Activated CD4-positive, alpha-beta memory T cell treated with anti-CD3 and anti-CD28 coated beads for 36 hours (primary cell): ENCODE measurements at regions of chr16 and their contacts with region 1.

Region 1: GRCh38 chr16:23842137-23842600 is 6.4 kb downstream of the PRKCB start:
- DNase-seq: peak; percentile 71
- H3K4me3 Mint-ChIP-seq: peak overlapping the region; percentile 14
- H3K27ac Mint-ChIP-seq: peak overlapping the region; percentile 68
- H3K4me1 Mint-ChIP-seq: peaks cover 87% of the 10 kb centered on the region
- H3K27me3 Mint-ChIP-seq: no peaks in the 10 kb centered on the region

Region 2: GRCh38 chr16:23570992-23571632 is 271.1 kb before region 1 on chr16:
- CTCF ChIA-PET with region 1: no interaction called
- POLR2A ChIA-PET with region 1: no interaction called
- intact Hi-C with region 1: no loop called
- DNase-seq: no peak
- H3K4me3 Mint-ChIP-seq: no peak overlapping the region
- H3K27ac Mint-ChIP-seq: no peak overlapping the region
- H3K4me1 Mint-ChIP-seq: peaks cover 2% of the 10 kb centered on the region
- H3K27me3 Mint-ChIP-seq: no peaks in the 10 kb centered on the region

Region 3: GRCh38 chr16:23770744-23771426 is 71.3 kb before region 1 on chr16:
- CTCF ChIA-PET with region 1: no interaction called
- POLR2A ChIA-PET with region 1: no interaction called
- intact Hi-C with region 1: no loop called
- DNase-seq: no peak
- H3K4me3 Mint-ChIP-seq: no peak overlapping the region
- H3K27ac Mint-ChIP-seq: no peak overlapping the region
- H3K4me1 Mint-ChIP-seq: no peaks in the 10 kb centered on the region
- H3K27me3 Mint-ChIP-seq: peaks cover 3% of the 10 kb centered on the region

Region 4: DNA sequence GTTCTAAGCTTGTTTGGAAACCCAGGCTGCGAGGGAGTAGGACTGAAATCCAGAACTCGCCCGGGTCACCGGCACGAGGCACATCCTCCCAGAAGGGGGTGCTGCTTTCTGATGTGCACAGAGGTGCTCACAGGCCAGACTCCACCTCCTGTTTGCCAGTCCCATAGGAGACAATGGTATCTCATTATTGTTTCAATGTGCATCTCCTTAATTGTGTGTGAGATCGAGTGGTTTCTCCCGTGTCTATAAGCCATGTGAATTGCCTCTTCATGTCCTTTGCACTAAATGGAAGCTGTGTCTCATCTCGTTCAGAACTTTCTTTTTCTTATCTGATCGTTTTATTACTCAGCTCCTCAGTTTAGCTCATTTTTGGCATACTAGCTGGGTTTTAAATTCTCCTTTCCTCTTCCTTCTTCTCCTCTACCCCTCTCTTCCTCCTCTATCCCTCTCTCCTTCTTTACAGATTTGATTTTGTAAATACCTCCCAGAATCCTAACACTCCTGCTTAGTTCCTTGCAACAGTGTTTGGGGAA is 38.5 kb before region 1 on chr16:
- CTCF ChIA-PET with region 1: interaction called, 11 read pairs
- POLR2A ChIA-PET with region 1: no interaction called
- intact Hi-C with region 1: loop called (anchors 2 kb)
- DNase-seq: peak; percentile 78
- H3K4me3 Mint-ChIP-seq: peak overlapping the region; percentile 17
- H3K27ac Mint-ChIP-seq: no peak overlapping the region
- H3K4me1 Mint-ChIP-seq: peaks cover 9% of the 10 kb centered on the region
- H3K27me3 Mint-ChIP-seq: no peaks in the 10 kb centered on the region

Region 5: GRCh38 chr16:23863511-23864422 is 21.6 kb after region 1 on chr16:
- CTCF ChIA-PET with region 1: interaction called, 3 read pairs
- POLR2A ChIA-PET with region 1: interaction called, 3 read pairs
- intact Hi-C with region 1: loop called (anchors 1 kb)
- DNase-seq: peak; percentile 44
- H3K4me3 Mint-ChIP-seq: peak overlapping the region; percentile 72
- H3K27ac Mint-ChIP-seq: peak overlapping the region; percentile 80
- H3K4me1 Mint-ChIP-seq: peaks cover 69% of the 10 kb centered on the region
- H3K27me3 Mint-ChIP-seq: no peaks in the 10 kb centered on the region

Region 6: DNA sequence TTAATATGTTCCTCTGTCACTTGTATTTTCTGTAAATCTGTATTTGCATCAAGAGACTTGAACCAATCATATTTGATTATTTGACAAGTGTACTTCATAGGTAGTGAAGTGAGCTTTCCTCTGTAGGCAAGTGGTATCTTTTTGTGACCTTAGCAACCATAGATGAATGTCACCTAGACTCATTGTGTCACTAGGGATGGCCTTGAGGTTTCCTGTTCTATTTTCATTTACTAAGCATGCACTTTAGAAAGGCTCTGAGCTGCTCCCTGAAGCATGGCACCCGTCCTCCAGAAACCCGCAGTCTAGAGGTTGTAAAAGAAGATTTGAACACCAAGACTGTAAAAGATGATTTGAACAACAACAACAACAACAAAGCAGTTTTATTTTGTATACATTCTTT is 145.3 kb after region 1 on chr16:
- CTCF ChIA-PET with region 1: no interaction called
- POLR2A ChIA-PET with region 1: no interaction called
- intact Hi-C with region 1: no loop called
- DNase-seq: no peak
- H3K4me3 Mint-ChIP-seq: no peak overlapping the region
- H3K27ac Mint-ChIP-seq: no peak overlapping the region
- H3K4me1 Mint-ChIP-seq: peaks cover 3% of the 10 kb centered on the region
- H3K27me3 Mint-ChIP-seq: no peaks in the 10 kb centered on the region

Region 7: DNA sequence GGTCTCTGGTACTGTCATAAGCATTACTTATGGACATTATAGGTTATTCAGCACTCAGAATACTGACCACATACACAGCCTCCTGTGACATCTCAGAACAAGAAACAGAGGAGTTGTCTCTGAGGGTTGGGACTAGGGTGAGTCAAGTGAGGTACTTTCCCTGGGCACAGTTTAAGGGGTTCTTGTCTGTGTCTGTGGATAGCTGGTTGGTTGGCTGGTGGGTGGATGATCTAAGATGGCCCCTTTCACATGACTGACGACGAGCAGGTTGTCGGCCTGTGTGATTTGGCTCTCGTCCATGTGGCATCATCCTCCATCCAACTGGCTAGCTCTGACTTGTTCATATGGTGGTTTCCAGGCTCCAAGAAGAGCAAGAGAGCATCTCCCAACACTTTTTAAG is 157.5 kb after region 1 on chr16:
- CTCF ChIA-PET with region 1: no interaction called
- POLR2A ChIA-PET with region 1: interaction called, 7 read pairs
- intact Hi-C with region 1: loop called (anchors 1 kb)
- DNase-seq: peak; percentile 89
- H3K4me3 Mint-ChIP-seq: no peak overlapping the region
- H3K27ac Mint-ChIP-seq: peak overlapping the region; percentile 18
- H3K4me1 Mint-ChIP-seq: peaks cover 20% of the 10 kb centered on the region
- H3K27me3 Mint-ChIP-seq: no peaks in the 10 kb centered on the region

Region 8: DNA sequence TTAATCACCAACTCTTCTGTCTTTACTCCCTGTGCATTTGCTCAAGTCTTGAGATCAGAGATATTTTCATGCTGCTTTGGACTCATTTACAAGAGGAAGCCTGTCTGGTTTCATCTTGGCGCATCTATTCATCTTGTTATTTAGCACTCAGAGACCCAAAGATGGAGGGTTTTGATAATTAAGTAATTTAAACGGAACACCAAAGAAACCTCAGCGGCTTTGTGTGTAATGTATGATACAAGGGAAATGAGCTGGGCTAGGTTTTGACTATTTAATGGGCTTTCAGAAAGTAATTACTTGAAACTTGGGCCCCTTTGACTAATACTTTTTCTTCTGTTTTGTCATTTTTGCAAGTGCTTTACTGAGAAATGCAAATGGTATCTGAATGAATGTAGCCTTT is 347.8 kb after region 1 on chr16:
- CTCF ChIA-PET with region 1: no interaction called
- POLR2A ChIA-PET with region 1: no interaction called
- intact Hi-C with region 1: loop called (anchors 5 kb)
- DNase-seq: no peak
- H3K4me3 Mint-ChIP-seq: no peak overlapping the region
- H3K27ac Mint-ChIP-seq: peak overlapping the region; percentile 68
- H3K4me1 Mint-ChIP-seq: peaks cover 43% of the 10 kb centered on the region
- H3K27me3 Mint-ChIP-seq: no peaks in the 10 kb centered on the region

Region 9: GRCh38 chr16:24729362-24729984 is 887.3 kb after region 1 on chr16 and contains the start of gene TNRC6A:
- CTCF ChIA-PET with region 1: no interaction called
- POLR2A ChIA-PET with region 1: no interaction called
- intact Hi-C with region 1: loop called (anchors 10 kb)
- DNase-seq: peak; percentile 88
- H3K4me3 Mint-ChIP-seq: peak within 1 kb of the TSS; percentile 98
- H3K27ac Mint-ChIP-seq: peak within 1 kb of the TSS; percentile 98
- H3K4me1 Mint-ChIP-seq: peaks cover 49% of the 10 kb centered on the region
- H3K27me3 Mint-ChIP-seq: no peaks in the 10 kb centered on the region
- total RNA-seq, gene TNRC6A: 31.7 to 36.3 TPM